CD8-positive, alpha-beta memory T cell (primary cell): ENCODE measurements at regions of chr12 and their contacts with region 1.

Region 1: GRCh38 chr12:8860165-8860961 is 37.9 kb downstream of the A2ML1 start:
- DNase-seq: peak; percentile 7 to 59 (median 21)
- H3K4me3 ChIP-seq: no peak overlapping the region
- H3K4me3 Mint-ChIP-seq: no peak overlapping the region
- H3K27ac ChIP-seq: no peak overlapping the region
- H3K27ac Mint-ChIP-seq: no peak overlapping the region
- H3K4me1 ChIP-seq: no peaks in the 10 kb centered on the region
- H3K4me1 Mint-ChIP-seq: no peaks in the 10 kb centered on the region
- H3K27me3 ChIP-seq: no peaks in the 10 kb centered on the region
- H3K27me3 Mint-ChIP-seq: peaks cover 0 to 13% of the 10 kb centered on the region in 2 donors

Region 2: GRCh38 chr12:8662593-8662992 is 197.8 kb before region 1 on chr12 and contains the start of gene MFAP5:
- CTCF ChIA-PET with region 1: interaction called, 10 read pairs
- POLR2A ChIA-PET with region 1: no interaction called
- DNase-seq: no peak
- H3K4me3 ChIP-seq: no peak within 1 kb of the TSS
- H3K4me3 Mint-ChIP-seq: no peak within 1 kb of the TSS
- H3K27ac ChIP-seq: no peak within 1 kb of the TSS
- H3K27ac Mint-ChIP-seq: no peak within 1 kb of the TSS
- H3K4me1 ChIP-seq: no peaks in the 10 kb centered on the region
- H3K4me1 Mint-ChIP-seq: no peaks in the 10 kb centered on the region
- H3K27me3 ChIP-seq: no peaks in the 10 kb centered on the region
- H3K27me3 Mint-ChIP-seq: peaks cover 8 to 10% of the 10 kb centered on the region in 2 donors
- total RNA-seq, gene MFAP5: not detected

Region 3: GRCh38 chr12:8681041-8681902 is 179.1 kb before region 1 on chr12:
- CTCF ChIA-PET with region 1: interaction called, 16 read pairs
- POLR2A ChIA-PET with region 1: no interaction called
- DNase-seq: no peak
- H3K4me3 ChIP-seq: no peak overlapping the region
- H3K4me3 Mint-ChIP-seq: no peak overlapping the region
- H3K27ac ChIP-seq: no peak overlapping the region
- H3K27ac Mint-ChIP-seq: peak overlapping the region in 1 of 8 donors; percentile 10
- H3K4me1 ChIP-seq: no peaks in the 10 kb centered on the region
- H3K4me1 Mint-ChIP-seq: peaks cover 6 to 7% (median 7%) of the 10 kb centered on the region in 3 donors
- H3K27me3 ChIP-seq: no peaks in the 10 kb centered on the region
- H3K27me3 Mint-ChIP-seq: peaks cover 3 to 4% of the 10 kb centered on the region in 2 donors

Region 4: GRCh38 chr12:8849876-8850275 is 10.5 kb before region 1 on chr12:
- CTCF ChIA-PET with region 1: interaction called, 10 read pairs
- POLR2A ChIA-PET with region 1: no interaction called
- DNase-seq: no peak
- H3K4me3 ChIP-seq: no peak overlapping the region
- H3K4me3 Mint-ChIP-seq: no peak overlapping the region
- H3K27ac ChIP-seq: no peak overlapping the region
- H3K27ac Mint-ChIP-seq: peak overlapping the region in 3 of 8 donors; percentile 1 to 17 (median 2)
- H3K4me1 ChIP-seq: no peaks in the 10 kb centered on the region
- H3K4me1 Mint-ChIP-seq: no peaks in the 10 kb centered on the region
- H3K27me3 ChIP-seq: no peaks in the 10 kb centered on the region
- H3K27me3 Mint-ChIP-seq: peaks cover 10 to 15% of the 10 kb centered on the region in 2 donors

Region 5: DNA sequence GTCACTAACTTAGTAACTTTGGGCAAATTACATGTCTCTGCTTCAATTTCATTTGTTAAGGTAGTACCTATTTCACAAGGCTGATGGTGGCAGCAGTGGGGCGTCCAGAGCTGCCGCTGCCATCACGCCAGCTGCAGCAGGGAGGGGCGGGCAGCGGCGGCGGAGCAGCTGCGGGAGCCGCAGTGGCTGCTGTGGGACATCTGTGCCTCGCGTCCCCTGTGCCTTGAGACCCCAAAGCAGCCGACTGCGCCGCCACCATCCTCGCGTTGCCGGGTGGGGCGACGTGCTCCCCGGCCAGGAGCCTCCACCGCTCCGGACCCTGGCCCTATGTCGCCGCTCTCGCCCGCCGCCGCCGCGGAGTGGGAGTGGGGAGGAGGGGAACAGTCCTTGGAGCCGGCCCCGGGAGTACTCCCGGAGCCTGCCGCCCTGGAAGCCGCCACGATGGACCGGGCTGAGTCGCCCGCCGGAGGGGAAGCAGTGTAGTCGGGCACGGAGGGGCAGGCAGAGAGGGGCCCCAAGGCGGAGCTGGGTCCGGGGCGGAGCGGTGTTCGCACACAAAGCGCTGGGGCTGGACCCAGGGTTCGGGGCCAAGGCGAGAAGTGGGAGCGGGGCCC is 203.9 kb after region 1 on chr12:
- CTCF ChIA-PET with region 1: no interaction called
- POLR2A ChIA-PET with region 1: no interaction called
- DNase-seq: peak in 4 of 5 donors; percentile 6 to 63 (median 37)
- H3K4me3 ChIP-seq: peak overlapping the region; percentile 16
- H3K4me3 Mint-ChIP-seq: peak overlapping the region; percentile 22 to 81 (median 77)
- H3K27ac ChIP-seq: no peak overlapping the region
- H3K27ac Mint-ChIP-seq: peak overlapping the region in 5 of 8 donors; percentile 7 to 75 (median 71)
- H3K4me1 ChIP-seq: peaks cover 10% of the 10 kb centered on the region
- H3K4me1 Mint-ChIP-seq: peaks cover 13 to 20% (median 16%) of the 10 kb centered on the region in 3 donors
- H3K27me3 ChIP-seq: no peaks in the 10 kb centered on the region
- H3K27me3 Mint-ChIP-seq: no peaks in the 10 kb centered on the region

Region 6: DNA sequence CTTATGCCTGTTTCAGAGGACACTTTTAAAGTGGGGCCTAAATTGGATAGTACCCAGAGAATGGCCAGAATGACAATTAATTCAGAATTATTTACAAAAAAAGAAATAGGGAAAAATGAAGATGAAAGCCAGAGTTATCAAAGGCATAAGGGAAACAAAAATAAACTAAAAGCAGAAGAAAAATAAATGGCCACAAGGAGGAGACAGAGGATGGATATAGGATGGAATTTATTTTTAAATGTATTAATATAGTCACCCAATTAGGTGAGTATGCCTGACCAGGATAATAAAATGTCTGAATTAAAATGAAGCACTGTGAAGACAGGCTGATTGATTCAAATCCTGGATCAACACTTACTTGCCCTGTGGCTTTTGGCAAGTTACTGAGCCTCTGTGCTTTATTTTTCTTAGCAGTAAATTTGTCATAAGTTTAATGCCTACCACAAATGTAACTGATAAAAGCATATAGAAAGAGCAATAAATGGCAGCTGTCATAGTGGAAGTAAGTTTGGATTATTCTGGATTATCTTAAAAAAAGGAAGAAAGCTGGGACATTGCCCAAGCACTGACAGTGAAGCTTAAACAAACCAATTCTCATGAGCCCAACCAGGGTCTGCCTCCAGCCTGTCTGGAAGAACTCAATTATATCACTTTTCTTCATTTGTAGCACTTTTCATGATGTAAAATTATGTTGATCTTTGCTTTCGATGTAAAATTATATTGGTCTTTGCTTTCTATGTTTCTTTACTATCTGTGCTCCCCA is 1173.6 kb after region 1 on chr12:
- CTCF ChIA-PET with region 1: no interaction called
- POLR2A ChIA-PET with region 1: no interaction called
- DNase-seq: no peak
- H3K4me3 ChIP-seq: no peak overlapping the region
- H3K4me3 Mint-ChIP-seq: no peak overlapping the region
- H3K27ac ChIP-seq: no peak overlapping the region
- H3K27ac Mint-ChIP-seq: no peak overlapping the region
- H3K4me1 ChIP-seq: no peaks in the 10 kb centered on the region
- H3K4me1 Mint-ChIP-seq: no peaks in the 10 kb centered on the region
- H3K27me3 ChIP-seq: no peaks in the 10 kb centered on the region
- H3K27me3 Mint-ChIP-seq: peaks cover 9 to 40% of the 10 kb centered on the region in 2 donors